AG04449 (cell line): ENCODE measurements at regions of chr19 and their contacts with region 1.

Region 1: GRCh38 chr19:41641879-41642485 is 15.1 kb upstream of the CEACAM4 start:
- DNase-seq: no peak
- H3K4me3 ChIP-seq: no peak overlapping the region
- CTCF ChIP-seq: peak; percentile 85

Region 2: GRCh38 chr19:41652250-41652649 is 10.3 kb after region 1 on chr19:
- CTCF ChIA-PET with region 1: interaction called, 59 read pairs
- POLR2A ChIA-PET with region 1: no interaction called
- DNase-seq: no peak
- H3K4me3 ChIP-seq: no peak overlapping the region
- CTCF ChIP-seq: no peak

Region 3: DNA sequence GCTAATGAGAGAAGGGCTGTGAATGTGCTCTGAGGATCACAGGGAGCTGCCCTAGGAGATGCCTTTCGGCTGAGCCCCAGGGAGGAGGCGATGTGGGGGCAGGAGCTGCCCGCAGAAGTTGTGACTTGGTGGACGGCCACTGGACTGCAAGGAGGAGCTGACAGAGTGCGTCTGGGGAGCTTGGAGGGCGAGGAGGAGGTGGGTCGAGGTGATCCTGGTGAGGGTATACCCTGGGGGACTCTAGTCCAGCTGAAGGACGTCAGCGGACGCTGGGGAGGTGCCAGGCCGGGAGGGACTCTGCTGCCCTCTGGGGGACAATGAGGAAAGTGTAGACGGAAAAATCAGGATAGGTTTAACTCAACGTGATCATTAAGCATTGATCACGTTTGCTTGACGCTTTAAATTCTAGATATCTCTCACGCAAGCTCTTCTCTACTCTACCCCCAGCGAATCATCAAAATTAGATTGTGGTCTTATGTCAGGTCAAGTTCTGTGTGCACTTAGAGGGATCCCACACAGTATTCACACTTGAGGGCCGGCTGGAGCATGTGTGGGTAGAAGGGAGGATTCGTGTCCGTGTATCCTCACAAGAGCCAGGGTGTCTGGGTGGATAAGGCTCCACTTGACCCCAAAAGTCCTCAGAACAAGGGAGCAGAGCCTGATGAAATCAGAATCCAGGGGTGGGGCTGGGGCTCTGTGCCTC is 49.4 kb after region 1 on chr19:
- CTCF ChIA-PET with region 1: interaction called, 19 read pairs
- POLR2A ChIA-PET with region 1: no interaction called
- DNase-seq: no peak
- H3K4me3 ChIP-seq: no peak overlapping the region
- CTCF ChIP-seq: peak; percentile 59

Region 4: DNA sequence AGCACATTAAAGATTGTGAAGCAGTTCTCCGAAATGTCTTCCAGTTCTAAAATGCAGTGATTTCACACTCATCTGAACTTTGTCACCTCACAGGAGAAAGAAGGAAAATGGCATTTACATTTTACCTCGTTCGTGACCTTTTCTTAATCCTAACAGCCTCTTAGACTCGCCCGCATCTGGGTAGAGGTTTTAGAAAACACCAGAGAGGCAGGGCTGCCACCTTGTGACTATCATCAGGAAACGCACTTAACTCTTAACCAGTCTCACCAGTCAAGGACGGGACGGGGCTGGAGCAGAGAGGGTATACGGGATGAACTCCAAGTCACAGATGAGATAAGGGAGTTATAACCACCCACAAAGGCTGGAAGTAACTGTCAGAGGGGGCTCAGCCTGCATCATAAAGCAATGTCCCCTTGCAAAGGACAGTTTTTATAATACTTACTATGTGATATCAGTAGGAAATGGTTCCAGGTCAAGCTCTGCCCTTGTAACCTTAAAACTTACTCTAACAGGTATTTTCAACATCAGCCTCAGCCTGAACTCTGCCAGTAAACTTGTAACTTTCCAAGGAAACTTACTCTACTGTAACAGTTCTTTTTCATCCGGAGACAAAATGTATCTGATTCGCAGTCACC is 104.7 kb after region 1 on chr19:
- CTCF ChIA-PET with region 1: interaction called, 41 read pairs
- POLR2A ChIA-PET with region 1: no interaction called
- DNase-seq: peak; percentile 3
- H3K4me3 ChIP-seq: no peak overlapping the region
- CTCF ChIP-seq: peak; percentile 54

Region 5: GRCh38 chr19:41753936-41754529 is 112.1 kb after region 1 on chr19:
- CTCF ChIA-PET with region 1: interaction called, 41 read pairs
- POLR2A ChIA-PET with region 1: no interaction called
- DNase-seq: no peak
- H3K4me3 ChIP-seq: no peak overlapping the region
- CTCF ChIP-seq: peak; percentile 58

Region 6: GRCh38 chr19:41795031-41795461 is 153.1 kb after region 1 on chr19:
- CTCF ChIA-PET with region 1: interaction called, 10 read pairs
- POLR2A ChIA-PET with region 1: no interaction called
- DNase-seq: no peak
- H3K4me3 ChIP-seq: no peak overlapping the region
- CTCF ChIP-seq: peak; percentile 55